CD4-positive, alpha-beta memory T cell (primary cell): ENCODE measurements at regions of chr10 and their contacts with region 1.

Region 1: GRCh38 chr10:9010093-9010492 is 955.6 kb downstream of the GATA3 start:
- DNase-seq: peak; percentile 69 to 80 (median 73)
- H3K4me3 ChIP-seq: no peak overlapping the region
- H3K4me3 Mint-ChIP-seq: peak overlapping the region; percentile 51 to 81 (median 66)
- H3K27ac ChIP-seq: no peak overlapping the region
- H3K27ac Mint-ChIP-seq: peak overlapping the region; percentile 64 to 97 (median 89)
- H3K4me1 ChIP-seq: peaks cover 33% of the 10 kb centered on the region
- H3K4me1 Mint-ChIP-seq: peaks cover 30 to 54% (median 43%) of the 10 kb centered on the region in 4 donors
- H3K27me3 ChIP-seq: no peaks in the 10 kb centered on the region
- H3K27me3 Mint-ChIP-seq: no peaks in the 10 kb centered on the region

Region 2: DNA sequence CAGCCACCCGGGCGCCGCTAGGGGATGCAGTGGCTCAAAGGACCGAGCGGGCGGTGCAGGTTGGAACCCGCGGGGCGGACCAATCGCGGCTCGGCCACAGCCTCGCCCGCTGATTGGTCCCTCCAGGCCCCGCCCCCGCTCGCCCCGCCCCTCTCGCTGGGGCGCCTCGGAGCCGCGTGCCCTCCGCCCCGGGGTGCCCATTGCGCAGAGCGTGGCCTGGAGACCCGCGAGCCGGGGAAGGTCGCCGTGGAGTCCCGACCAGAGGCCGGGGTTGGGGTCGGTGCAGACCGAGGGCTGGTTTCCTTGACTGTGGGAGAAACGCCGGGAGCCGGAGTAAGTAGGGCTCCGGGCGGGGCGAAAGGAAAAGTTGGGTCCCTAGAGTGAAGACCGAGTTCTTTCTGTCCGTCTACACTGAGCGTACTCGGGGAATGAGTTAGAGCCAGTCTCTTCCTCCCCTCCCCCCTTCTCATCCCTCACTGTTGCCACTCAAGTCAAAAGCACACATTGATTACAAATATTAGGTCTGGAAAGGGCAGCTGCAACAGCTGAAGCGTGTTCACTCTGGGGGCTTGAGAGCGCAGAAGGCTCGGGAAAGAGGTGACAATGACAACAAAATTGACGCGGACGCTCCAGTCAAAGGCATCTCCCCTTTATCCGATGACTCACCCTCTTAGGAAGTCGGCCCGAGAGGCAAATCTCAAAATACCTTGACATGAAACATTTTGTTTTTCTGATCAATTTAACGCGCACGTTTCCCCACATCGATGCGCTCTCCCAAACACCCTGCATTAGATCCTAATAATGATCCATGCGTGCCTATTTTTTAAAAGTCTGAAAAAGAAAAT is 956.4 kb before region 1 on chr10:
- CTCF ChIA-PET with region 1: no interaction called
- POLR2A ChIA-PET with region 1: interaction called, 5 read pairs
- intact Hi-C with region 1: loop called (anchors 5 kb)
- DNase-seq: peak; percentile 86 to 92 (median 89)
- H3K4me3 ChIP-seq: peak overlapping the region; percentile 84 to 94
- H3K4me3 Mint-ChIP-seq: peak overlapping the region; percentile 93 to 99 (median 98)
- H3K27ac ChIP-seq: peak overlapping the region; percentile 83
- H3K27ac Mint-ChIP-seq: peak overlapping the region; percentile 95 to 99 (median 98)
- H3K4me1 ChIP-seq: peaks cover 60% of the 10 kb centered on the region
- H3K4me1 Mint-ChIP-seq: peaks cover 13 to 66% (median 35%) of the 10 kb centered on the region in 4 donors
- H3K27me3 ChIP-seq: peaks cover 36% of the 10 kb centered on the region
- H3K27me3 Mint-ChIP-seq: peaks cover 20 to 27% of the 10 kb centered on the region in 2 donors

Region 3: GRCh38 chr10:8435176-8436055 is 574.7 kb before region 1 on chr10:
- CTCF ChIA-PET with region 1: no interaction called
- POLR2A ChIA-PET with region 1: no interaction called
- intact Hi-C with region 1: no loop called
- DNase-seq: no peak
- H3K4me3 ChIP-seq: no peak overlapping the region
- H3K4me3 Mint-ChIP-seq: peak overlapping the region in 1 of 8 donors; percentile 30
- H3K27ac ChIP-seq: no peak overlapping the region
- H3K27ac Mint-ChIP-seq: peak overlapping the region in 2 of 7 donors; percentile 35 to 60
- H3K4me1 ChIP-seq: peaks cover 28% of the 10 kb centered on the region
- H3K4me1 Mint-ChIP-seq: peaks cover 31 to 57% (median 40%) of the 10 kb centered on the region in 4 donors
- H3K27me3 ChIP-seq: no peaks in the 10 kb centered on the region
- H3K27me3 Mint-ChIP-seq: no peaks in the 10 kb centered on the region

Region 4: DNA sequence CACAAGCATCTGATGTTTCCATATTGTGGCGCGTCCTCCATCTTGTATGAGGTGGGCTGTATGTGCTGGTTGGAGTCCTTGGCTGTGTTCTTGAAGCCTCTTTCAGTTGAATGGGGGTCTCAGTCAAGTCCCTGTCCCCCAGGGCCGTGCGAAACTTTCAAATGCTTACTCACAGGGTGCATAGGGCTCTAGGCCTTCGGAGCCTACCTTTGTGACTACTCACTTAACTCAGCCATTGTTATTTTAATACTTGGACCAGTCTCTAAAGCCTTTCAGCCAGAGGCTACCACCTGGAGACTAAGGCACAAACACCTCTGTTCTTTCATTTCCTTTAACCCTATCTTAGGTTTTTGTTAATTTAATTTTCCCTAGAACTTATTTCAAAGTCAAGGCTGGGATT is 169.7 kb before region 1 on chr10:
- CTCF ChIA-PET with region 1: no interaction called
- POLR2A ChIA-PET with region 1: no interaction called
- intact Hi-C with region 1: no loop called
- DNase-seq: no peak
- H3K4me3 ChIP-seq: no peak overlapping the region
- H3K4me3 Mint-ChIP-seq: no peak overlapping the region
- H3K27ac ChIP-seq: no peak overlapping the region
- H3K27ac Mint-ChIP-seq: no peak overlapping the region
- H3K4me1 ChIP-seq: no peaks in the 10 kb centered on the region
- H3K4me1 Mint-ChIP-seq: no peaks in the 10 kb centered on the region
- H3K27me3 ChIP-seq: no peaks in the 10 kb centered on the region
- H3K27me3 Mint-ChIP-seq: peaks cover 3% of the 10 kb centered on the region in 2 donors

Region 5: GRCh38 chr10:9024210-9024609 is 14.1 kb after region 1 on chr10:
- CTCF ChIA-PET with region 1: interaction called, 6 read pairs
- POLR2A ChIA-PET with region 1: interaction called, 40 read pairs
- intact Hi-C with region 1: no loop called
- DNase-seq: no peak
- H3K4me3 ChIP-seq: no peak overlapping the region
- H3K4me3 Mint-ChIP-seq: no peak overlapping the region
- H3K27ac ChIP-seq: no peak overlapping the region
- H3K27ac Mint-ChIP-seq: peak overlapping the region in 2 of 7 donors; percentile 4 to 90
- H3K4me1 ChIP-seq: no peaks in the 10 kb centered on the region
- H3K4me1 Mint-ChIP-seq: peaks cover 4 to 27% (median 10%) of the 10 kb centered on the region in 4 donors
- H3K27me3 ChIP-seq: no peaks in the 10 kb centered on the region
- H3K27me3 Mint-ChIP-seq: peaks cover 5 to 7% of the 10 kb centered on the region in 2 donors

Region 6: DNA sequence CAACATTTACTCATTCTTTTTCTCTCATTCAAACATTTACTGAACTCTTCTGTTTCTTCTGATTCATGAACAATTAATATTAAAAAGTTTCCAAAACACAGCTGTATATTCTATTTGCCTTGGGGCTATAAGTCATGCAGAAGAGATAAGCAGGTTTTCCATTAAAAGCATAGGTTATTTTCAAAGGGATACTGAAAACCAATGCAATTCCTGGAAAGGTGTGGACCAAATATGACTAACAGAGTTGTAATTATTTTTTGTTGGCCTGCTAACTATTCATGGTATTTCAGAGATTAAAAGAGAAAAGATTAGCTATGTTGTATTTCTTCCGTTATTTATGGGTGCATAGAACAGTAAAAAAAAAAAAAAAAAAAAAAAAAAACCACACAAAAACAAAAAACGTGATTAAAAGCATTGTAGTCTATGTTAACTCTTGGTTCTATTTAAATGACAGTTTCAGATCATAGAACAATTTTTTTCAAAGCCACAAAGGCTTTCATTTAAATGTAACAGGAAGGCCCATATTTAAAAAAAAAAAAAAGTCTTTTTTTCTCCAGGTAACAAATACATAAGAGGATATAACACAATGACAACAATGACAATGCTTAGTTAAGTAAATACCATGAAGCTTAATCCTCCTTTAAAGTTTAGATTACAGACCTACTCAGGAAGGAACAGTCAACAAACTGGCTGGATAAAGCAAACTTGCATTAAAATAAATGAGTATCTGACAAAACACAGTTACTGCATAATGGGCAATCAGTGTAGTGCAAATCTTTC is 87.3 kb after region 1 on chr10:
- CTCF ChIA-PET with region 1: interaction called, 4 read pairs
- POLR2A ChIA-PET with region 1: interaction called, 12 read pairs
- intact Hi-C with region 1: loop called (anchors 5 kb)
- DNase-seq: peak in 4 of 5 donors; percentile 71 to 82 (median 77)
- H3K4me3 ChIP-seq: no peak overlapping the region
- H3K4me3 Mint-ChIP-seq: peak overlapping the region in 6 of 8 donors; percentile 12 to 67 (median 47)
- H3K27ac ChIP-seq: no peak overlapping the region
- H3K27ac Mint-ChIP-seq: peak overlapping the region; percentile 77 to 95 (median 88)
- H3K4me1 ChIP-seq: peaks cover 33% of the 10 kb centered on the region
- H3K4me1 Mint-ChIP-seq: peaks cover 17 to 30% (median 25%) of the 10 kb centered on the region in 4 donors
- H3K27me3 ChIP-seq: no peaks in the 10 kb centered on the region
- H3K27me3 Mint-ChIP-seq: peaks cover 0 to 2% of the 10 kb centered on the region in 2 donors